ENCODE measurements at regions of chr6 and their contacts with region 1.

Region 1: DNA sequence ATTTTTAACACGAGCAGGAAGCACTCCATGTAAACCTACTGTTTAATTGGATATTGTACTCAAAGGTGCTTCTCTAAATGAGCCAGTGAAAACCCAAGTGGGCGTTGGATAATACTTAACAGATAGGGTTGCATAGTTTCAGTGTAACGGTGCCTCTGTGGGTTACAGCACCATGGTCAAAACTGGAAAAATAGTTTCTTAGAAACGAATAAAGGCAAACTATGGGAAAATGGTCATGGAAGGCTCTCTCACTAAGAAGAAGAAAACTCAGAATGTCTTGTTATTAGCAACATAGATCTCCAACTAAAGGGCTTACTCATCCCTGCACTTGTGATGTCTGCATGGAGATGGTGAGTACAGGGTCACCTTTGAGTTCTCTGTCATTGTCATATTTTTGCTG is 59.1 kb upstream of the NEDD9 start:
- DNase-seq: peak; percentile 50
- H3K4me3 Mint-ChIP-seq: no peak overlapping the region
- H3K27ac Mint-ChIP-seq: peak overlapping the region; percentile 56
- H3K4me1 Mint-ChIP-seq: peaks cover 27% of the 10 kb centered on the region
- H3K27me3 Mint-ChIP-seq: no peaks in the 10 kb centered on the region

Region 2: DNA sequence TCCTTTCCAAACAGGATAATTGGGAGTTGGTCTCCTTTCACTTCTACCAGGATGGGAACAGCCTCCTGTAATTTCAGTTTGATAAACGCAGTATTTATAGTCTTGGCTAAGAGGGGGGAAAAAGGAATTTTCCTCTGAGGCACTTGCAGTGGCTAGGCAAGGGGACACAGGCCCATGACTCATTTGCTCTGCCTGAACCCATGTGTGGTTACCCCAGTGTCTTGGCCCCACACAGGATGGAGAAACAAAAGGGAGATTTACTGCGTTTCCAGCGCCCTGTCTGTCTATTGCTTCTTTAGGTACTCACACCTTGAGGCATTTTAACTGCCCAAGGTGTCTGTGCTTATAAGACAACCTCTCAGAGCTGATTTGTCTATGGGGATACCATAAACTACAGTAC is 15.6 kb after region 1 on chr6:
- CTCF ChIA-PET with region 1: no interaction called
- POLR2A ChIA-PET with region 1: no interaction called
- intact Hi-C with region 1: no loop called
- DNase-seq: no peak
- H3K4me3 Mint-ChIP-seq: no peak overlapping the region
- H3K27ac Mint-ChIP-seq: no peak overlapping the region
- H3K4me1 Mint-ChIP-seq: peaks cover 21% of the 10 kb centered on the region
- H3K27me3 Mint-ChIP-seq: no peaks in the 10 kb centered on the region

Region 3: GRCh38 chr6:11317885-11318771 is 26.5 kb after region 1 on chr6:
- CTCF ChIA-PET with region 1: no interaction called
- POLR2A ChIA-PET with region 1: interaction called, 3 read pairs
- intact Hi-C with region 1: loop called (anchors 1 kb)
- DNase-seq: peak; percentile 88
- H3K4me3 Mint-ChIP-seq: peak overlapping the region; percentile 14
- H3K27ac Mint-ChIP-seq: peak overlapping the region; percentile 92
- H3K4me1 Mint-ChIP-seq: peaks cover 63% of the 10 kb centered on the region
- H3K27me3 Mint-ChIP-seq: no peaks in the 10 kb centered on the region

Region 4: GRCh38 chr6:11330413-11330760 is 38.8 kb after region 1 on chr6:
- CTCF ChIA-PET with region 1: no interaction called
- POLR2A ChIA-PET with region 1: no interaction called
- intact Hi-C with region 1: no loop called
- DNase-seq: no peak
- H3K4me3 Mint-ChIP-seq: no peak overlapping the region
- H3K27ac Mint-ChIP-seq: peak overlapping the region; percentile 80
- H3K4me1 Mint-ChIP-seq: peaks cover 71% of the 10 kb centered on the region
- H3K27me3 Mint-ChIP-seq: no peaks in the 10 kb centered on the region